HEK293T (cell line): ENCODE measurements at regions of chr15 and their contacts with region 1.

Region 1: DNA sequence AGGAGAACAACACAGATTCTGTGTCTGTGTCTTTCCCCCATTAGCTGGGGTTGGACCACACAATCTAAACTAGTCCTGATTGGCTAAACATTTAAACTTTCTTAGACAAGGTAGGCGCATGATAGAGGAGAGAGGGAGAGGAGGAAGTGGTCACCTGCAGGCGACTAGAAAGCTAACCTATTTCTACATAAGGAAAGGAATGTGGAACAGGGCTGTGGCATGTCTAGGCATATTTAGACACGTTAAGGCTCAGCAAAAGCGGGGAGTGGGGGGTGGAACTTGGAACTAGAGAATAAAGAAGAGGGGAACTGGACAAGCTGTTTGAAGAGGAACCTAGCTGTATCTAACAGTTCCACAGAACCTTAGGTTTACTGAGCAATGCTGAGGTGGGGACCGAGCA is 12.8 kb downstream of the LRRC28 start:
- DNase-seq: no peak

Region 2: GRCh38 chr15:99275525-99276128 is 11.5 kb after region 1 on chr15:
- CTCF ChIA-PET with region 1: interaction called, 16 read pairs
- POLR2A ChIA-PET with region 1: no interaction called
- DNase-seq: no peak